ENCODE measurements at regions of chr5 and their contacts with region 1.

Region 1: GRCh38 chr5:181207214-181208107 is 2.5 kb upstream of the TRIM7 start:
- DNase-seq: peak; percentile 89
- ATAC-seq: peak; percentile 68
- H3K4me3 Mint-ChIP-seq: peak overlapping the region; percentile 78
- H3K27ac Mint-ChIP-seq: peak overlapping the region; percentile 86
- H3K4me1 Mint-ChIP-seq: peaks cover 40% of the 10 kb centered on the region
- H3K27me3 Mint-ChIP-seq: peaks cover 23% of the 10 kb centered on the region

Region 2: GRCh38 chr5:181005791-181006190 is 201.7 kb before region 1 on chr5:
- CTCF ChIA-PET with region 1: no interaction called
- POLR2A ChIA-PET with region 1: no interaction called
- DNase-seq: no peak
- ATAC-seq: no peak
- H3K4me3 Mint-ChIP-seq: no peak overlapping the region
- H3K27ac Mint-ChIP-seq: no peak overlapping the region
- H3K4me1 Mint-ChIP-seq: no peaks in the 10 kb centered on the region
- H3K27me3 Mint-ChIP-seq: peaks cover 2% of the 10 kb centered on the region

Region 3: DNA sequence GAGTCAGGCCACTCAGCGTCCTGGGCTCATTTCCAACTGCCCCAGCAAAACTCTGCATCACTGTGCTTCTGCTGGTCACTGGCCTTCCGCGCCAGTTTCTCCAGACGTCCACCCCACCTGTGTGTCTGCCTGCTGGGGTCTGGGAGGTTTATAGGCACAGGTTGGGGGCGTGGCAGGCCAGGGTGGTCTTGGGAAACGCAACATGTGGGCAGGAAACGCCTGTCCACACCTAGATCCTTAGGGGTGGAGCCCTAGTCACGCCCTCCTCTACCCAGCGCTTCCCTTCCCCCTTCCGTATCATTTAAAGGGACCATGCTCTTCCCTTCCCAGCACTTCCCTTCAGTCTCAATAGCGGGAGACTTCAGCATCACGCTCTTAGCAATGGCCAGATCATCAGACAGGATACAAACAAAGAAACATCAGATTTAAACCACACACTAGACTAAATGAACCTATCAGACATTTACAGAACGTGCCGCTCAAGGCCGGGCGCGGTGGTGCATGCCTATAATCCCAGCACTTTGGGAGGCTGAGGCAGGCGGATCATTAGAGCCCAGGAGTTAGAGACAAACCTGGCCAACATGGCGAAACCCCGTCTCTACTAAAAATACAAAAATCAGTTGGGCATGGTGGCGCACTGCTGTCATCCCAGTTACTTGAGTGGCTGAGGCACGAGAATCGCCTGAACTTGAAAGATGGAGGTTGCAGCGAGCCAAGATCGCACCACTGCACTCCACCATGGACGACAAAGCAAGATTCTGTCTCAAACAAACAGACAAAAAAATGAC is 179.2 kb before region 1 on chr5:
- CTCF ChIA-PET with region 1: no interaction called
- POLR2A ChIA-PET with region 1: no interaction called
- DNase-seq: no peak
- ATAC-seq: no peak
- H3K4me3 Mint-ChIP-seq: no peak overlapping the region
- H3K27ac Mint-ChIP-seq: no peak overlapping the region
- H3K4me1 Mint-ChIP-seq: no peaks in the 10 kb centered on the region
- H3K27me3 Mint-ChIP-seq: peaks cover 7% of the 10 kb centered on the region

Region 4: DNA sequence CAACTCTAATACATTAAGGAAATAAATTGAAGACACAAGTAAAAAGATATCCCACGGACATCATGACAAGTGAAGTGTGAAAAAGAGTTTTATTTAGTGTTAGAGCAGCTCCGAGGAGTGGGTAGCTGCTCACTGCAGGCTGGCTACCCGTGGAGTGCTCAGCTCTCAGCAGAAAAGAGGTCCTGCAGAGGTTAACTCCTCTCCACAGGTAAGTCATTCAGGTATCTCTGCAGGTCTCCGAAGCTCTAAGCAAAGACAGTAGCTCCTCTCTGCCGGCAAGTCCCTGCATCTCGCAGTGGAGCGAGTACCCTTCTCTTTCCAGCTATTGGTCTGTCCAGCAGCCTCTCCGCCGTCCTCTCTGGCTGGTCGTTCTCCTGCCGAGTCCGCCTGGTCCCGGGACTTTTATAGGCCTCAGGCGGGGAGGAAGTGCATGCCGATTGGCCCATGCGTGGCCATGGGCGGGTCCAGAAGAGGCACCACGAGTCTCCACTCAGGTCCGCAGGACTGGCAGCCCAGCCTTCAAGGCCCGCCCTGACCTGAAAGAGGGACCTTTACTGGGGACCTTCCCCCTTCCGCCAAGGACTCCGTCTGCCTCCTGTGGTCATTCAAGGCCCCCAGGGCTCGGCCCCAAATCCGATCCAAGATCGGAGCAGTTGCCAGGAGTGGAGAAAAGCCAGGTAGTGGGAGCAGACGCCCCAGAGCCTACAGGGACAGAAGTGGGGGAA is 137.5 kb before region 1 on chr5:
- CTCF ChIA-PET with region 1: no interaction called
- POLR2A ChIA-PET with region 1: no interaction called
- DNase-seq: no peak
- ATAC-seq: no peak
- H3K4me3 Mint-ChIP-seq: no peak overlapping the region
- H3K27ac Mint-ChIP-seq: no peak overlapping the region
- H3K4me1 Mint-ChIP-seq: no peaks in the 10 kb centered on the region
- H3K27me3 Mint-ChIP-seq: peaks cover 28% of the 10 kb centered on the region

Region 5: GRCh38 chr5:181173420-181174342 is 33.8 kb before region 1 on chr5:
- CTCF ChIA-PET with region 1: interaction called, 11 read pairs
- POLR2A ChIA-PET with region 1: no interaction called
- DNase-seq: peak; percentile 85
- ATAC-seq: peak; percentile 79
- H3K4me3 Mint-ChIP-seq: peak overlapping the region; percentile 81
- H3K27ac Mint-ChIP-seq: peak overlapping the region; percentile 96
- H3K4me1 Mint-ChIP-seq: peaks cover 47% of the 10 kb centered on the region
- H3K27me3 Mint-ChIP-seq: peaks cover 28% of the 10 kb centered on the region

Region 6: DNA sequence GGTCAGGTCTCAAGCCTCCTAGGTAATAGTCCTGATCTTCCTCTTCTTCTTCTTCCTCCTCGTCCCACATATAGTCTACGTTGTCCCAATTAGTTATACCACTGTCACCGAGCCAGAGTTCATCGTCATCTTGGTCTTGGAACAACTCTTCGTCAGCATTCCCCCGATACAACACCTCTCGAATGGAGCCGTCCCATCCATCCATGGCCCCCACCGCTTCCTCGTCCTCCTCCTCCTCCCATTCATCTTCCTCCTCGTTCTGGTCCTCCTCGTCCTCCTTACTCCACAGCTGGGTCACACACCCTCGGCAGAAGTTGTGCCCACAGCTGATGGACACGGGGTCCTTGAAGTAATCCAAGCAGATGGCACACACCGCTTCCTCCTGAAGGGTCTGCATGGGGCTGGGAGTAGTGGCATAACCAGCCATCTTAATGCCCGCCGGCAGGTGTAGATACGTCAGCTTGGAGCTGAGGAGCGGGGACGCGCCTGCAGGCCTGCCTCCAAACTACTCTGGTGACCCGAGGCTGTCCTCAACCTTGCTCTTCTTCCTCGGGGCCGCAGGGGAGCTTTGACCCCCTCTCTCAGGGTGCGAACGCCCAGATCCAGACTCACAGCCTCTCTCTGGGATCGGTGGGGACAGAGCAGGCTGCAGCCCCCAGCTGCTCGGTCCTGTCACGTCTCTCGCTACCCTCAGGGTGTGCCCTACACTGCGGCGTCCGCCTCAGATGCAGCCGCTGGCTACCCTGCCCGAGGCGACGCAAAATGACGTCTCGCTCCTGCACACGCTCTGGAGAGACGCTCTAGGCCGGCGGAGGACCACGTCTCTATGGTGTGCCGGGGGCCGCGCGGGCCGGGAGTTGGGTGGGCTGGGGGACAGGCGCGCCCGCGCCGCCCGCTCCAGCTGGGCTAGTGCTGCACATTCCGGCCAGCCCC is 53.2 kb after region 1 on chr5 and contains the start of gene TRIM52:
- CTCF ChIA-PET with region 1: interaction called, 3 read pairs
- POLR2A ChIA-PET with region 1: interaction called, 28 read pairs
- DNase-seq: peak; percentile 94
- ATAC-seq: peak; percentile 87
- H3K4me3 Mint-ChIP-seq: peak within 1 kb of the TSS; percentile 93
- H3K27ac Mint-ChIP-seq: peak within 1 kb of the TSS; percentile 96
- H3K4me1 Mint-ChIP-seq: peaks cover 35% of the 10 kb centered on the region
- H3K27me3 Mint-ChIP-seq: no peaks in the 10 kb centered on the region
- total RNA-seq, gene TRIM52: 22.4 to 23.2 TPM

Measured in activated CD8-positive, alpha-beta T cell treated with anti-CD3 and anti-CD28 coated beads, Interleukin-2, amount 10 ng/mL, durations not matched to agents 7 days and 5 days (primary cell).